Activated CD4-positive, alpha-beta memory T cell treated with anti-CD3 and anti-CD28 coated beads, Interleukin-2, amount 10 ng/mL, durations not matched to agents 7 days and 5 days (primary cell): ENCODE measurements at regions of chr9 and their contacts with region 1.

Region 1: DNA sequence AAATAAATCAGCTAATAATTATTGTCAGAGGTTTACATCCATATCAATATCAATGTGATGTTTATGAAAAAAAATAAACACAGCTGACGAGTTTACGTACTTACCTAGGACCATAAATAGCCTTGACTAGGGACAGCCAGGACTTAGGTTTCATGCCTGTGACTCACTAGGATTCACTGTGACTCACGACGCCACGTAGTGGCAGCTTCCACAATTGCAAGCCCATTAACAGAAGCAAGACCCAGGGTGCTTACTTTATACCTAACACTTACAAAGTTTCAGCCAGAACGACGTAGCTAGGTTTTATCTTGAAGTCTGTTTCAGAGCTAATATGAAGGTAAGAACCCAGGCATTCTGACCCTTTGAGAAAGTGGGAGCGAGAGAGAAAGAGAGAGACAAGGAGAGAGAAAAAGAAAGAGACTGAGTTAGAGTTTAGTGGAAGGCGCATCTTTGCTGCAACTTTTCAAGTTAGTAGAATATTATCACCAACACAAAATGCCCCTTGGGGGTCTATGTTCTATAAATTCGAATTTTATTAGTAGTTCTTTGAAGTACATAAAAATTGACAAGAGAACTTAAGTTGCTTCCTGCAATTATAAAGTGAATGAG is 191.2 kb downstream of the GNA14 start:
- DNase-seq: peak; percentile 87
- H3K4me3 Mint-ChIP-seq: no peak overlapping the region
- H3K27ac Mint-ChIP-seq: no peak overlapping the region
- H3K4me1 Mint-ChIP-seq: peaks cover 13% of the 10 kb centered on the region
- H3K27me3 Mint-ChIP-seq: no peaks in the 10 kb centered on the region

Region 2: GRCh38 chr9:77063645-77064285 is 393.2 kb before region 1 on chr9:
- CTCF ChIA-PET with region 1: no interaction called
- POLR2A ChIA-PET with region 1: no interaction called
- DNase-seq: no peak
- H3K4me3 Mint-ChIP-seq: no peak overlapping the region
- H3K27ac Mint-ChIP-seq: no peak overlapping the region
- H3K4me1 Mint-ChIP-seq: no peaks in the 10 kb centered on the region
- H3K27me3 Mint-ChIP-seq: peaks cover 1% of the 10 kb centered on the region

Region 3: DNA sequence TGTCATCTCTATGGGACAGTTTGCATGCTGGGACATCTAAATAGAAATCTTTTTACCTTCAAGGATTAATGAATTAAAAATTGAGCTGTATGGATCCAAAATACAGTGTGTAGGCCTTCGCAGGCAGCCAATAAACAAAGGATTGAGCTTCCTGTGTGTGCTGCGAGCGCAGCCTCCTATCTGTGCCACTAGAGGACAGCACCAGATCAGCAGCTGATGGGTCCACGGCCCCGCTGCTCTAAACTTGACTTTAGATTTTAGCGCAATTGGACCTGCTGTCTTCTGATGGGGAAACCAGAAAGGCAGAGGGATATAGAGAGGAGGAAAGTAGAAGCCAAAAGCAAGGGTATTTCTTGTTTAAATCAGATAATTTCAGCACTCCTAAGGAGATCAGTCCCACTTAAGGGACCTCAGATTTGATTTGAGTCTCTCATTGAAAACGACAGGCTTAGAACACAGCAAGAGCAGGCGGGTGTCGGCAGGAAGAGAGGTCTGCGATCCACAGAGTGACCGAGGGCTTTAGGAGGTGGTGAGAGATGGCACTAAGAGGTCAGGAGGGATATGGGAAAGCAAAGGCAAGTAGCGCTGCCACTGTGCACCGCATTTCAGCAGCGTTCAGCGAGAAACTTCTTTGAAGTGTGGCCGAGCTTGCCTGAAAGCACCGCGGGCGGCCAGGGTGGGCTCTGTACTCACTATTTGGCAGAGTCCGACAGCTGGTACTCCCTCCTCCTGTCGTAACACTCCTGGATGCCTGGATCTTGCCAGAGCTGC is 23.1 kb before region 1 on chr9:
- CTCF ChIA-PET with region 1: interaction called, 27 read pairs
- POLR2A ChIA-PET with region 1: no interaction called
- DNase-seq: peak; percentile 56
- H3K4me3 Mint-ChIP-seq: no peak overlapping the region
- H3K27ac Mint-ChIP-seq: no peak overlapping the region
- H3K4me1 Mint-ChIP-seq: peaks cover 3% of the 10 kb centered on the region
- H3K27me3 Mint-ChIP-seq: peaks cover 1% of the 10 kb centered on the region

Region 4: DNA sequence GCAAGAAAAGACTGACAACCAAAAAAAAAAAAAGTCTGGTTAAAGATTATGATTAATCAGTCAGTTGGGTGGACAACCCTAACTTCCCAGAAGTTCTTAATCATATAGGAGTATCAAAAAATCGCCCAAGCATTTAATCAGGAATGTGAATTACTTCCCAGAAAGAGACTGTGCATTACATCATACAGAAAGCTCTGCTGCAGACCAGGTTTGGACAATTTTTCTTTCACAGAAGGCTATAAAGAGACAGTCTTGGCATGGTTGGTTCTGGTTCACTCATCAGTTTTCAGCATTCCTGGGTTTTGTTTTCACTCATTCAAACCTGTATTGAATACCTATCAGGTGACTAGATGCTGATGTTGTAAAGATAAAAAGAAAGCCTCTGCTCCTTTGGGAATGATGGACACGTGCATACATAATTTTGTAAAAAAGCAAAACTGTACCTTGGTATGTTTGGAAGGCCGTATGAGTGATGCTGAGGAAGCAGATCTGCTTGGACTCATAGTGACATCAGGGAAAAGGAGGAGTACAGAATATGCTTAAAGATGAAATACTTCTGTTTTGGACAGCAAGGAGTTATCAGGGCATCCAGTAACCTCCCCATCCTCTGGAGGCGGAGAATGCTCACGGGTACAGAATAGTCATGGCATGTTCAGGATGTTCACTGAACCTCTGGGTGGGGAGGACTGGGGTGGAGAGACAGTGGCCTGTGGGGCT is 12.7 kb after region 1 on chr9:
- CTCF ChIA-PET with region 1: interaction called, 70 read pairs
- POLR2A ChIA-PET with region 1: interaction called, 6 read pairs
- DNase-seq: no peak
- H3K4me3 Mint-ChIP-seq: no peak overlapping the region
- H3K27ac Mint-ChIP-seq: no peak overlapping the region
- H3K4me1 Mint-ChIP-seq: peaks cover 19% of the 10 kb centered on the region
- H3K27me3 Mint-ChIP-seq: peaks cover 3% of the 10 kb centered on the region

Region 5: GRCh38 chr9:77488439-77489126 is 31.6 kb after region 1 on chr9:
- CTCF ChIA-PET with region 1: interaction called, 161 read pairs
- POLR2A ChIA-PET with region 1: interaction called, 5 read pairs
- DNase-seq: no peak
- H3K4me3 Mint-ChIP-seq: peak overlapping the region; percentile 74
- H3K27ac Mint-ChIP-seq: no peak overlapping the region
- H3K4me1 Mint-ChIP-seq: peaks cover 34% of the 10 kb centered on the region
- H3K27me3 Mint-ChIP-seq: peaks cover 6% of the 10 kb centered on the region

Region 6: GRCh38 chr9:77751341-77752091 is 294.6 kb after region 1 on chr9:
- CTCF ChIA-PET with region 1: interaction called, 13 read pairs
- POLR2A ChIA-PET with region 1: no interaction called
- DNase-seq: no peak
- H3K4me3 Mint-ChIP-seq: no peak overlapping the region
- H3K27ac Mint-ChIP-seq: no peak overlapping the region
- H3K4me1 Mint-ChIP-seq: peaks cover 8% of the 10 kb centered on the region
- H3K27me3 Mint-ChIP-seq: no peaks in the 10 kb centered on the region